ENCODE measurements at regions of chr4 and their contacts with region 1.

Region 1: GRCh38 chr4:81471588-81472288 is at the start of gene RASGEF1B:
- DNase-seq: peak; percentile 92 to 97 (median 96)
- H3K4me3 ChIP-seq: peak within 1 kb of the TSS; percentile 75 to 97 (median 93)
- H3K27ac ChIP-seq: peak within 1 kb of the TSS; percentile 86 to 94
- H3K4me1 ChIP-seq: peaks cover 24 to 46% (median 29%) of the 10 kb centered on the region in 4 experiments
- H3K27me3 ChIP-seq: no peaks in the 10 kb centered on the region

Region 2: GRCh38 chr4:81494031-81494431 is 22.3 kb after region 1 on chr4:
- CTCF ChIA-PET with region 1: interaction called, 17 read pairs
- POLR2A ChIA-PET with region 1: interaction called, 7 read pairs
- DNase-seq: peak in 2 of 3 donors; percentile 75 to 81
- H3K4me3 ChIP-seq: peak overlapping the region in 6 of 7 experiments; percentile 12 to 73 (median 37)
- H3K27ac ChIP-seq: peak overlapping the region in 1 of 2 experiments; percentile 56
- H3K4me1 ChIP-seq: peaks cover 6 to 35% (median 25%) of the 10 kb centered on the region in 4 experiments
- H3K27me3 ChIP-seq: no peaks in the 10 kb centered on the region

Region 3: GRCh38 chr4:81512757-81513501 is 41.2 kb after region 1 on chr4:
- CTCF ChIA-PET with region 1: interaction called, 17 read pairs
- POLR2A ChIA-PET with region 1: interaction called, 10 read pairs
- DNase-seq: peak; percentile 69 to 91 (median 89)
- H3K4me3 ChIP-seq: peak overlapping the region in 3 of 7 experiments; percentile 21 to 59 (median 31)
- H3K27ac ChIP-seq: peak overlapping the region; percentile 65 to 75
- H3K4me1 ChIP-seq: peaks cover 33 to 80% (median 52%) of the 10 kb centered on the region in 4 experiments
- H3K27me3 ChIP-seq: no peaks in the 10 kb centered on the region

Region 4: DNA sequence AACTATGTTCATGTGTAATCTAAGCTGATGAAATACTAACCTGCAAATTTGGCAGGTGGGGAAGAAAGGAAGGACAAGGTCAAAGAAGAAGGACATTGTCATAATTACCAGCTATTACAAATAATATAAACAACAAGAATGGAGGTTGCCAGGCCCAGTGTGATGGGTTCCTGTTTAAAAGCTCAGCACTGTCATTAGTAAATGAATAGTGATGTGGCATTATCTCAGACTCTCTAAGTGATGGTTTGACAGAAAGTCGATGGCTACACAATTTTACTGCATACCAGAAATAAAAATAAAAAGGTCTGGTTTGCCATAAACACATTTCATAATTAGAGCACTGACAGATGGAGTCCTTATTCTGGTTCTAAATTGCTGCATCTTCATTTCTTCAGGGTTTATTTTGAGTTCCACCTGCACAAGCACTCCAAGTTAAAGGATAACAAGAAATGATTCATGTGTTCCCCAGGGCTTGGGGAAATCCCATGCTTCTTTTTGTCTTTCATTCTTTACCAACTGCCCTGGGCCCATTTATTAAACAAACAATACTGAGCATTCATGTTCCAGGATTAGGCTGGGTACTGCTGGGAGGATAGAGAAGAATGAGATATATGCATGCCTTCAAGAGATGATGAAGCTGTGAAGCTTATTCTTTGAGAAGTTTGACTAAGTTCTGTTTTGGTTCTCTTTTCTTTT is 367.8 kb after region 1 on chr4:
- CTCF ChIA-PET with region 1: interaction called, 66 read pairs
- POLR2A ChIA-PET with region 1: no interaction called
- DNase-seq: no peak
- H3K4me3 ChIP-seq: no peak overlapping the region
- H3K27ac ChIP-seq: no peak overlapping the region
- H3K4me1 ChIP-seq: no peaks in the 10 kb centered on the region
- H3K27me3 ChIP-seq: peaks cover 0 to 2% (median 0%) of the 10 kb centered on the region in 5 experiments

Region 5: GRCh38 chr4:81919238-81919637 is 447.5 kb after region 1 on chr4:
- CTCF ChIA-PET with region 1: interaction called, 10 read pairs
- POLR2A ChIA-PET with region 1: no interaction called
- DNase-seq: peak; percentile 32 to 56 (median 55)
- H3K4me3 ChIP-seq: no peak overlapping the region
- H3K27ac ChIP-seq: no peak overlapping the region
- H3K4me1 ChIP-seq: no peaks in the 10 kb centered on the region
- H3K27me3 ChIP-seq: no peaks in the 10 kb centered on the region